Panc1 (cell line): ENCODE measurements at regions of chr12 and their contacts with region 1.

Region 1: DNA sequence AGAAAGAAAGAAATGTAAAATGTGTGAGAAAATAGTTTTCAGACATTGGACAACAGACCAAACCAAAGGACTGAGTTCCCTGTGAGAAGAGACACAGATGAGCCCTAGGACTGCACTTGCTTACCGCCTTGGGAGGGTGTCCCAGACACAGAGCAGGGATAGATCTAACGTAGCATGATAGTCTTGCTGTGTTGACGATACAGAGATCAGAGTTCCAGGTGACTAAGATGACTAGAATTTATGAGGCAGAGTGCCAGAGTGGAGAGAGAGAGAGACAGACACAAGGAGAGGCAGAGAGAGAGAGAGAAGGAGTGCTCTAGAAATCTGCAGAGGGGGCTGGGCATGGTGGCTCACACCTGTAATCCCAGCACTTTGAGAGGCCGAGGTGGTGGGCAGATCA is 148.2 kb upstream of the LMNTD1 start:
- DNase-seq: no peak
- ATAC-seq: no peak
- H3K4me3 ChIP-seq: no peak overlapping the region
- H3K27ac ChIP-seq: no peak overlapping the region
- H3K4me1 ChIP-seq: no peaks in the 10 kb centered on the region
- H3K27me3 ChIP-seq: peaks cover 2% of the 10 kb centered on the region; the same call in 1 of the 2 replicates
- CTCF ChIP-seq: no peak

Region 2: GRCh38 chr12:25682421-25682820 is 18.9 kb before region 1 on chr12:
- CTCF ChIA-PET with region 1: no interaction called
- POLR2A ChIA-PET with region 1: interaction called, 11 read pairs
- in situ Hi-C with region 1: no loop called
- intact Hi-C with region 1: no loop called
- DNase-seq: no peak
- ATAC-seq: no peak
- H3K4me3 ChIP-seq: no peak overlapping the region
- H3K27ac ChIP-seq: no peak overlapping the region
- H3K4me1 ChIP-seq: no peaks in the 10 kb centered on the region
- H3K27me3 ChIP-seq: peaks cover 10% of the 10 kb centered on the region
- CTCF ChIP-seq: no peak

Region 3: DNA sequence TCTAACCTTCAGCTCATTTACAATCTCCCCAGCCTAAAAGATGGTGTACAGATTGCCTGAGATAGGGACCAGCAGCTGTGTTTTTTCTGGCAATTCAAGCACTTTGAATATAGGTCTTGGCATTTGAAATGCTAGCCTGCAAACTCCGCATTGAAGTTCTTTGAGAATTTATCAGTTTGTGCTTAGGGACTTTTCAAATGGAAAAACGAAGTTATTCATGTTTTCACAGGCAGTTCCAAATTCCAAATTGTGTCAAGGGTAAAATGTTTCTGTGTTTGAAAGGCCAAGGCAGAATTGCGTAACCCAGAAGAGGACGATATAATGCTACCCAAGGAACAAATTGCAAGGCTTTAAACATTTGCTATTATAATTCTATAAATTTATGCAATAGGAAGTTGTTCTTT is 88.3 kb after region 1 on chr12:
- CTCF ChIA-PET with region 1: no interaction called
- POLR2A ChIA-PET with region 1: no interaction called
- in situ Hi-C with region 1: no loop called
- intact Hi-C with region 1: no loop called
- DNase-seq: no peak
- ATAC-seq: no peak
- H3K4me3 ChIP-seq: no peak overlapping the region
- H3K27ac ChIP-seq: no peak overlapping the region
- H3K4me1 ChIP-seq: no peaks in the 10 kb centered on the region
- H3K27me3 ChIP-seq: no peaks in the 10 kb centered on the region
- CTCF ChIP-seq: no peak